ENCODE measurements at regions of chr2 and their contacts with region 1.

Region 1: DNA sequence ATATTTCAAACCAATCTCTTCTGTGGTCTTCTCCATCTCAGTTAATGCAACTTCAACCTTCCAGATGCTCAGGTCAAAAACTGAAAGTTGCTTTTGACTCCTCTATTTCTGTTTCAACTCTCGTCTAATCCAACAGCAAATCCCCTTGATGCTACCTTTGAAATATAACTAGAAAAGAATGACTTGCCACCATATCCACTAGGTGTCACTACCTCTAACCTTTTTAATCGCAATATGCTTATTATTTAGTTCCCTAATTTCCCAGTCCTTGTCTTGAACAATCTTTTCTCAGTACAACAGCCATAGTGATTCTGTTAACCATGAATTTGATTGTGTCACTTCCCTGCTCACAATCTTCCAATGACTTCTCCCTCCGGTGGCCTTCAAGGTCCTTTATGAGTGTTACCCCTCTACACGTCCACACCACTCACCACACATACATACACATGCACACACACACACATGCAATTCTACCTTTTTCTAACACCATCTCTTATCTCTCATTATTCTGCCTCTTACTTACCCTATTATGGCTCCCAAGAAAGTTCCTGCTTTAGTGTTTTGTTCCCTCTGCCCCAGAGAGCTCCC is 245.5 kb upstream of the KCNJ3 start:
- DNase-seq: peak; percentile 24
- H3K4me3 ChIP-seq: no peak overlapping the region
- H3K27ac ChIP-seq: no peak overlapping the region
- H3K4me1 ChIP-seq: no peaks in the 10 kb centered on the region
- H3K27me3 ChIP-seq: no peaks in the 10 kb centered on the region
- CTCF ChIP-seq: peak in 1 of 2 donors; percentile 22
- POLR2A ChIP-seq: no peak

Region 2: GRCh38 chr2:154623819-154624218 is 170.8 kb after region 1 on chr2:
- CTCF ChIA-PET with region 1: no interaction called
- POLR2A ChIA-PET with region 1: no interaction called
- dilution Hi-C with region 1: no loop called
- intact Hi-C with region 1: loop called (anchors 5 kb)
- DNase-seq: peak; percentile 45
- H3K4me3 ChIP-seq: no peak overlapping the region
- H3K27ac ChIP-seq: no peak overlapping the region
- H3K4me1 ChIP-seq: no peaks in the 10 kb centered on the region
- H3K27me3 ChIP-seq: no peaks in the 10 kb centered on the region
- CTCF ChIP-seq: peak; percentile 37 to 53
- POLR2A ChIP-seq: no peak

Region 3: DNA sequence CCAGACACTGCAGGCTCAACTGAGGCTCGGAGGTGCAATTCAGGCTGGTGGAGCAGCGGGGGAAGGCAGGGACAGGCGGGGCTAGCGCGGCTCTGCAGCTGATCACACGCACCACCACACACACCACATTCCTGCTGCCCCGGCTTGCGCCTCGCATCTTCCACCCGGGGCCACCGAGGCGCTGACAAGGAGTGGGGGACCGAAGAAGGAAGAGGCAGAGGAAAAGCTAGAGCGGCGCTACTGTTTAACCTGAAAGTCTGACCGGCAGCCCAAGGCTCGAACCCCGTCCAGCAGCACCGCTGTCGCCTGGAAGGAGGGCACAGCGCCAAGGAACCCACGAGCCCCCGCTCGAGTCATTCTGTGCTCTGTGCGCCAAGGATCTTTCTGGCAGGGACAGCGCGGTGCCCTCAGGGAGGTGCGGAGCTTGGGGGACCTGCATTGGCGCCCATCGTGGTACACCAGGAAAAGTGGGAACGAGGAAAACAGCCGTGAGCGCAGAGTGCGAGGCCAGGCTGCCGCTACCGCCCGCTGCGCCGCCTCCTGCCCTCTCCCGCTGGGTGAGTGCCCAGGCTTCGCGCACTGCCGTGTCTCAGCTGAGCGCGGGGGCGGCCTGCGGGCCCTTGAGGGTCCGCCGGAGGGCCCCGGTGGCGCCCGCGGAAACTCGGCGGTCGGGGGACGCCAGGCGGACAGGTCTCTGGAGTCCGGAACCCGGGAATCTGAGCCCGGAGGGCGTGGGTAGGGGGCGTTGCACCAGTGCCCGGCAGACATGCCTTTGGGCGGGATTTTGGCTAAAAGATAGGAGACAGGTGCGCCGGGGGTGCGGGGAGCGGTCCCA is 244.6 kb after region 1 on chr2:
- CTCF ChIA-PET with region 1: no interaction called
- POLR2A ChIA-PET with region 1: no interaction called
- dilution Hi-C with region 1: no loop called
- intact Hi-C with region 1: loop called (anchors 5 kb)
- DNase-seq: no peak
- H3K4me3 ChIP-seq: peak overlapping the region in 1 of 3 experiments; percentile 13
- H3K27ac ChIP-seq: no peak overlapping the region
- H3K4me1 ChIP-seq: no peaks in the 10 kb centered on the region
- H3K27me3 ChIP-seq: peaks cover 15 to 22% of the 10 kb centered on the region in 2 experiments
- CTCF ChIP-seq: no peak
- POLR2A ChIP-seq: no peak

Region 4: GRCh38 chr2:155223781-155224406 is 770.9 kb after region 1 on chr2:
- CTCF ChIA-PET with region 1: no interaction called
- POLR2A ChIA-PET with region 1: no interaction called
- dilution Hi-C with region 1: no loop called
- intact Hi-C with region 1: loop called (anchors 1 kb)
- DNase-seq: peak; percentile 37
- H3K4me3 ChIP-seq: no peak overlapping the region
- H3K27ac ChIP-seq: no peak overlapping the region
- H3K4me1 ChIP-seq: no peaks in the 10 kb centered on the region
- H3K27me3 ChIP-seq: no peaks in the 10 kb centered on the region
- CTCF ChIP-seq: peak; percentile 6 to 10
- POLR2A ChIP-seq: no peak

Region 5: DNA sequence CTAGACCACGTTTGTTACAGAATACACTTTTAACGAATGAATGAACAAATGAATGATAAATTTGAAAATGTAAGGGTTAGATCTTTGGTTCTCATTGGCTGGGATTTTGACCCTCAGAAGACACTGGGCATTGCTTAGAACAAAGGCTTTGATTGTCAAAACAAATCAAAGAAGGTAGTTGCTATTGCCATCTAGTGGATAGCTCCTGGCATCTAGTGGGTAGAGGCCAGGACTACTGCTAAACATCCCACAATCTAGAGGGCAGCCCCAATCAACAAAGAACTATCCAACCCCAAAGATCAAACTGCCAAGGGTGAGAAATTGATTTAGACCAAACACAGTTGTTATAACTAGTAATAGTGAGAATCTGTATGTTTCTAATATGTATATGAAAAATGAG is 797.8 kb after region 1 on chr2:
- CTCF ChIA-PET with region 1: interaction called, 4 read pairs
- POLR2A ChIA-PET with region 1: no interaction called
- dilution Hi-C with region 1: no loop called
- intact Hi-C with region 1: loop called (anchors 2 kb)
- DNase-seq: peak; percentile 17
- H3K4me3 ChIP-seq: no peak overlapping the region
- H3K27ac ChIP-seq: no peak overlapping the region
- H3K4me1 ChIP-seq: no peaks in the 10 kb centered on the region
- H3K27me3 ChIP-seq: no peaks in the 10 kb centered on the region
- CTCF ChIP-seq: peak; percentile 25 to 30
- POLR2A ChIP-seq: no peak

Region 6: GRCh38 chr2:155310589-155310988 is 857.6 kb after region 1 on chr2:
- CTCF ChIA-PET with region 1: interaction called, 5 read pairs
- POLR2A ChIA-PET with region 1: no interaction called
- dilution Hi-C with region 1: no loop called
- intact Hi-C with region 1: loop called (anchors 1 kb)
- DNase-seq: peak; percentile 33
- H3K4me3 ChIP-seq: no peak overlapping the region
- H3K27ac ChIP-seq: no peak overlapping the region
- H3K4me1 ChIP-seq: no peaks in the 10 kb centered on the region
- H3K27me3 ChIP-seq: no peaks in the 10 kb centered on the region
- CTCF ChIP-seq: peak in 1 of 2 donors; percentile 8
- POLR2A ChIP-seq: no peak